Natural killer cell (primary cell): ENCODE measurements at regions of chr9 and their contacts with region 1.

Region 1: GRCh38 chr9:124658165-124659017 is 112.7 kb downstream of the NR6A1 start:
- DNase-seq: peak; percentile 57 to 68
- ATAC-seq: peak; percentile 87 to 93 (median 92)
- H3K4me3 ChIP-seq: peak overlapping the region; percentile 51
- H3K4me3 Mint-ChIP-seq: peak overlapping the region; percentile 99
- H3K27ac ChIP-seq: peak overlapping the region; percentile 77
- H3K27ac Mint-ChIP-seq: peak overlapping the region; percentile 97 to 98
- H3K4me1 ChIP-seq: peaks cover 11% of the 10 kb centered on the region
- H3K4me1 Mint-ChIP-seq: peaks cover 77 to 91% of the 10 kb centered on the region in 2 donors
- H3K27me3 ChIP-seq: no peaks in the 10 kb centered on the region
- H3K27me3 Mint-ChIP-seq: no peaks in the 10 kb centered on the region
- CTCF ChIP-seq: no peak

Region 2: DNA sequence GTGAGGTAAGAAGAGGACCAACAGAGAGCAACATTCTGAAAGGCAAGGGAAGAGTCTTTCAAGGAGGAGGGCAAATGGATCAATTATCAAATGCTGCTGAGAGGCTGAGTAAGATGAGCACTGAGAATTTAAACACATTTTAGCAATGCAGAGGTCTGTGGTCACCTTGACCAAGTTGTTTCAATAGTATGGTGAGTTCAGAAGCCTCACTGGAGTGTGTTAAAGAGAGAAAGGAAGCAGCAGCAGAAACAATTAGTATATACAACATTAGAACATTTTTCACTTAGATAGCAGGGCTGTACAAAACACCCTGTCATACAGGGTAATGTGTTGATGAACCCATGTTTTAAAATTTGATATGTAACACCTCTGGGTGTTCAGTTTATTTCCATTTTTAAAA is 18.8 kb before region 1 on chr9:
- intact Hi-C with region 1: loop called (anchors 2 kb)
- DNase-seq: no peak
- ATAC-seq: peak; percentile 52 to 87 (median 56)
- H3K4me3 ChIP-seq: no peak overlapping the region
- H3K4me3 Mint-ChIP-seq: peak overlapping the region; percentile 58
- H3K27ac ChIP-seq: peak overlapping the region; percentile 41
- H3K27ac Mint-ChIP-seq: peak overlapping the region; percentile 75 to 87
- H3K4me1 ChIP-seq: peaks cover 4% of the 10 kb centered on the region
- H3K4me1 Mint-ChIP-seq: peaks cover 27 to 54% of the 10 kb centered on the region in 2 donors
- H3K27me3 ChIP-seq: no peaks in the 10 kb centered on the region
- H3K27me3 Mint-ChIP-seq: no peaks in the 10 kb centered on the region
- CTCF ChIP-seq: no peak

Region 3: GRCh38 chr9:124708633-124709291 is 50.4 kb after region 1 on chr9:
- intact Hi-C with region 1: loop called (anchors 1 kb)
- DNase-seq: no peak
- ATAC-seq: no peak
- H3K4me3 ChIP-seq: no peak overlapping the region
- H3K4me3 Mint-ChIP-seq: no peak overlapping the region
- H3K27ac ChIP-seq: no peak overlapping the region
- H3K27ac Mint-ChIP-seq: peak overlapping the region; percentile 0 to 25
- H3K4me1 ChIP-seq: no peaks in the 10 kb centered on the region
- H3K4me1 Mint-ChIP-seq: peaks cover 26 to 39% of the 10 kb centered on the region in 2 donors
- H3K27me3 ChIP-seq: no peaks in the 10 kb centered on the region
- H3K27me3 Mint-ChIP-seq: no peaks in the 10 kb centered on the region
- CTCF ChIP-seq: no peak

Region 4: DNA sequence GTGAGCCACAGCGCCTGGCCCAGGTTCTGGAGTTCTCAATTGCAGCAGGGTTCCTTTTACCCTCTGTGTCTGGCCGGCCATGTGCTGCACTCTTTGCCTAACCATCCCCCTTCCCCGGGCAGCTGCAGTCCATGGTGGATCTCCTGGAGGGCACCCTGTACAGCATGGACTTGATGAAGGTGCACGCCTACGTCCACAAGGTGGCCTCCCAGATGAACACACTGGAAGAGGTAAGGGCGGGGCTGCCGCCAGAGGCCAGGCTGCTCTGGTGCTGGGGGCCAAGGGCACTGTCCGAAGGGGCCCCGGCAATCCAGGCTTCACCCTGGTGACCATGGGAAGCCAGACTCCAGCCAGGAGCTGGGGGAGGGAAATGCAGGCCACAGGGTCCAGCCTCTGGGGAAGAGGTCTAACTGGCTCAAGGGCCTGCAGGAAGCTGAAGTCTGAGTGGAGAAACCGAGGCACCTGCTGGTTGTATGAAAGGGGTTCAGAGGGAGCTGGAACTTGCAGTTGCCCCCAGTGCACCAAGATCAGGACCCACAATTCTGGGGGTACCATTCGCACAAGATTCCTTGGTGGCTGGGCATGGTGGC is 136.6 kb after region 1 on chr9:
- intact Hi-C with region 1: no loop called
- DNase-seq: peak in 1 of 2 donors; percentile 21
- ATAC-seq: no peak
- H3K4me3 ChIP-seq: no peak overlapping the region
- H3K4me3 Mint-ChIP-seq: no peak overlapping the region
- H3K27ac ChIP-seq: no peak overlapping the region
- H3K27ac Mint-ChIP-seq: no peak overlapping the region
- H3K4me1 ChIP-seq: peaks cover 10% of the 10 kb centered on the region
- H3K4me1 Mint-ChIP-seq: no peaks in the 10 kb centered on the region
- H3K27me3 ChIP-seq: no peaks in the 10 kb centered on the region
- H3K27me3 Mint-ChIP-seq: no peaks in the 10 kb centered on the region
- CTCF ChIP-seq: no peak